ENCODE measurements at regions of chr1 and their contacts with region 1.

Region 1: GRCh38 chr1:63917571-63918417 is 144.0 kb downstream of the ROR1 start:
- DNase-seq: peak; percentile 78
- ATAC-seq: peak; percentile 73
- H3K4me3 Mint-ChIP-seq: no peak overlapping the region
- H3K27ac Mint-ChIP-seq: peak overlapping the region; percentile 69
- H3K4me1 Mint-ChIP-seq: peaks cover 89% of the 10 kb centered on the region
- H3K27me3 Mint-ChIP-seq: no peaks in the 10 kb centered on the region
- CTCF ChIP-seq: peak; percentile 58

Region 2: GRCh38 chr1:63624911-63625310 is 292.9 kb before region 1 on chr1:
- CTCF ChIA-PET with region 1: no interaction called
- POLR2A ChIA-PET with region 1: no interaction called
- DNase-seq: no peak
- ATAC-seq: no peak
- H3K4me3 Mint-ChIP-seq: no peak overlapping the region
- H3K27ac Mint-ChIP-seq: no peak overlapping the region
- H3K4me1 Mint-ChIP-seq: peaks cover 36% of the 10 kb centered on the region
- H3K27me3 Mint-ChIP-seq: no peaks in the 10 kb centered on the region
- CTCF ChIP-seq: no peak

Region 3: GRCh38 chr1:63674238-63674864 is 243.4 kb before region 1 on chr1:
- CTCF ChIA-PET with region 1: interaction called, 21 read pairs
- POLR2A ChIA-PET with region 1: no interaction called
- DNase-seq: peak; percentile 82
- ATAC-seq: peak; percentile 95
- H3K4me3 Mint-ChIP-seq: no peak overlapping the region
- H3K27ac Mint-ChIP-seq: peak overlapping the region; percentile 31; the same call in 1 of the 2 replicates
- H3K4me1 Mint-ChIP-seq: peaks cover 23% of the 10 kb centered on the region
- H3K27me3 Mint-ChIP-seq: no peaks in the 10 kb centered on the region
- CTCF ChIP-seq: peak; percentile 34; the same call in 1 of the 2 replicates

Region 4: DNA sequence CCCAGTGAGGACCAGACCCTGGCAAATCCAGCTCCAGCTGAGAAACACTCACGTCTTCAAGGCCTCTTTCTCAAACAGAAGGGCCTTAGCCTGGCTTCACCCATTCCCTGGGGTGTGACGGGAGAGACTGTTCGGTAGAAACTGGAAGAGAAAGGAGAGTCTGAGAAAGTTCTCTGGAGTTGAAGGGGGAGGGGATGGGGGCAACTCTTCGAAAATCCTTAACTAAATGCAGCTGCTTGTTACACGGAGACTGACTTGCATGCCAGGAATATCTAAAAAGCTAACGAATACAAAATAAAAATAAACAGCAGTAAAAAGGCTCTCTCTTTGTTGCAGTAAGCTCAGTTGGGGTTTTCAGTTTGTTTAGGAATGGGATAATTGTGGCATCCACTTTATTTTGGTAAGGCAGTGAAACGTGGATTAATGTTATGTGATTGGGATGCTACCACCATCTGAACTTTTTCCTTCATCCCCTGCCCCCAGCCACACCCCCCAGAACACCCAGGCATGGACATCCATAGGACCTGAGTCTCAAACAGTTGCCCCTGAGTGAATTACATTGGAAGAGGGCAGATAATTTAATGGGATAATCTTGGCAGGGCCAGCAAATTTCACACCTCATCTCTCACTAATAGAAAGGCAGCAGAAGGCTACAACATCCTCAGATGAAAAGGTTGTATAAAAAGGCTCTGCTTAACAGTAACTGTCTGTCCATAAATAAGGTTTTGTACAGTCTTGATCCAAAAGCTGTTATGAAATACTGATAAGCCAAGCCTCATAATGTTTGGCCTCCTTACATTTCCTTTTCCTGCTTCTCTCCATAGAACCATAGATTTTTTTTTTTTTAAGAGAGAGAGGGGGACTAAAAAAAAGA is 138.2 kb before region 1 on chr1:
- CTCF ChIA-PET with region 1: interaction called, 20 read pairs
- POLR2A ChIA-PET with region 1: interaction called, 3 read pairs
- DNase-seq: no peak
- ATAC-seq: no peak
- H3K4me3 Mint-ChIP-seq: peak overlapping the region; percentile 52
- H3K27ac Mint-ChIP-seq: peak overlapping the region; percentile 98
- H3K4me1 Mint-ChIP-seq: peaks cover 86% of the 10 kb centered on the region
- H3K27me3 Mint-ChIP-seq: no peaks in the 10 kb centered on the region
- CTCF ChIP-seq: no peak

Region 5: DNA sequence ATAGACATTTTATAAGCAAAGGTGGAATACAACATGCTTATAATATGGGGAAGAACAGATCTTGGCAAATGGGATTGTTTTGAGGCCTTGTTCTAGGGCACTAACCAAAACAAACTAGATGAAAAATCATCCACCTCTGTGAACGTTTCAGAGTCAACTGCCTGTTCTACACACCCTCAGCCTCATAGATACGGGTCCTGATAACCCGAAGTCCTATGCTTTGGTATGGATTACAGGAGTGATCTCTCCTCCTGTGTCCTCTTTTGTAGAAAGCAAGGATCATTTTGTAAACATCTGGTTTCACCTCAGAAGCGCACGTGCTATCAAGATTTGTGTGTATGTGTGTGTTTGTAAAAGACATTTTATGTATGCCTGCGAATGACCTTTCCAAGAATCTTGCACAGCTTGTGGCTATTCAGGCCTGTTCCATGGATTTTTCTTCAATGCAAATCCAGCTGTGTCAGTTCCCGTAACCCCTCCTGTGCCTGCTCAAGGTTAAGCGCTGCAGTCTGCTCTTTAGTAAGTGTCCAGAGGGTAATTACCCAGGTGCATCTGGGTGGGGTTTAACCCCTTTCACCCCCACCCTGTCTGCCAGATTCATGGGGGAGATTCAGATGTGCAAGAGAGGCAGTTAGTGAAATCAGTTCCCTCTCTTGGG is 11.6 kb before region 1 on chr1:
- CTCF ChIA-PET with region 1: interaction called, 36 read pairs
- POLR2A ChIA-PET with region 1: no interaction called
- DNase-seq: no peak
- ATAC-seq: peak; percentile 46
- H3K4me3 Mint-ChIP-seq: peak overlapping the region; percentile 11
- H3K27ac Mint-ChIP-seq: peak overlapping the region; percentile 75
- H3K4me1 Mint-ChIP-seq: peaks cover 81% of the 10 kb centered on the region
- H3K27me3 Mint-ChIP-seq: no peaks in the 10 kb centered on the region
- CTCF ChIP-seq: no peak

Region 6: GRCh38 chr1:64136752-64137411 is 219.1 kb after region 1 on chr1:
- CTCF ChIA-PET with region 1: interaction called, 15 read pairs
- POLR2A ChIA-PET with region 1: no interaction called
- DNase-seq: peak; percentile 84
- ATAC-seq: peak; percentile 92
- H3K4me3 Mint-ChIP-seq: no peak overlapping the region
- H3K27ac Mint-ChIP-seq: no peak overlapping the region
- H3K4me1 Mint-ChIP-seq: peaks cover 7% of the 10 kb centered on the region
- H3K27me3 Mint-ChIP-seq: no peaks in the 10 kb centered on the region
- CTCF ChIP-seq: peak; percentile 90